Activated CD8-positive, alpha-beta memory T cell treated with anti-CD3 and anti-CD28 coated beads, Interleukin-2, amount 10 ng/mL, durations not matched to agents 7 days and 5 days (primary cell): ENCODE measurements at regions of chr13 and their contacts with region 1.

Region 1: GRCh38 chr13:21297914-21298831 is 121.7 kb downstream of the MRPL57 start:
- DNase-seq: peak; percentile 88
- ATAC-seq: peak; percentile 95
- H3K4me3 Mint-ChIP-seq: peak overlapping the region; percentile 82
- H3K27ac Mint-ChIP-seq: peak overlapping the region; percentile 68
- H3K4me1 Mint-ChIP-seq: peaks cover 27% of the 10 kb centered on the region
- H3K27me3 Mint-ChIP-seq: no peaks in the 10 kb centered on the region

Region 2: DNA sequence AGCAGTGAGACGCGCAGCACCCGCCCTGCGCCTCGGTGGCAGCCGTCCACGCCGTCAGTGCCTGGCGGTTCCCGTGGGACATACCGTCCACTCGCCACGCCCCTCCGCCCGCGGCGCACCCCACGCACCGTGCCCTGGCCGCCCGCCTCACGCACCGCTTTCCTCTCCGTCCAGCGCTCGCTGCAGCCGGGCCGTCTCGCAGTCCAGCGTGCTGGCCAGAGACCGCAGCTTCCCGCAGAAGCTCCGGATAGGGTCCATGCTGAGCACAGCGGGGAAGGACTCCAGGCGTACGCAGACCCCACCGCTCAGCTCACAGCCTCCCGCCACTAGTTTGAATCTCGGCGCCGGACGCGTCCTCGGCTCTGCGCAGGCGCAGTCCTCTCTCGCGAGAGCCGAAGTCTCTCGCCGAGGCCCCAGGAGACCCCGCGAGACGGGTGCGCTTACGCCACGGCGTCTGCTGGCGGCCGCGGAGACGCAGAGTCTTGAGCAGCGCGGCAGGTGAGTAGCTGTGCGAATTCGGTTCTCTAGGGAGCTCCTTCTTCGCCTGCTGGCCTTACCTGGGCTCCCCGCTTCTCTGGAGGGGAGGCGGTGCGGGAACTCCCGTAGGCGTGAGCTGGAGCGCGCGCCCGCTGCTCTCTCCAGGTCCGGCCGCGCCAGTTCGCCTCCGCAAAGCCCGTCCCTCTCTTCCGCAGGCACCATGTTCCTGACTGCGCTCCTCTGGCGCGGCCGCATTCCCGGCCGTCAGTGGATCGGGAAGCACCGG is 121.8 kb before region 1 on chr13 and contains the starts of genes MRPL57 and SKA3:
- CTCF ChIA-PET with region 1: interaction called, 18 read pairs
- DNase-seq: peak; percentile 96
- ATAC-seq: peak; percentile 95
- H3K4me3 Mint-ChIP-seq: peak within 1 kb of the TSS; percentile 99
- H3K27ac Mint-ChIP-seq: peak within 1 kb of the TSS; percentile 97
- H3K4me1 Mint-ChIP-seq: peaks cover 37% of the 10 kb centered on the region
- H3K27me3 Mint-ChIP-seq: no peaks in the 10 kb centered on the region
- total RNA-seq, gene MRPL57: 22.5 to 23.5 TPM
- total RNA-seq, gene SKA3: 36.6 to 39.6 TPM

Region 3: DNA sequence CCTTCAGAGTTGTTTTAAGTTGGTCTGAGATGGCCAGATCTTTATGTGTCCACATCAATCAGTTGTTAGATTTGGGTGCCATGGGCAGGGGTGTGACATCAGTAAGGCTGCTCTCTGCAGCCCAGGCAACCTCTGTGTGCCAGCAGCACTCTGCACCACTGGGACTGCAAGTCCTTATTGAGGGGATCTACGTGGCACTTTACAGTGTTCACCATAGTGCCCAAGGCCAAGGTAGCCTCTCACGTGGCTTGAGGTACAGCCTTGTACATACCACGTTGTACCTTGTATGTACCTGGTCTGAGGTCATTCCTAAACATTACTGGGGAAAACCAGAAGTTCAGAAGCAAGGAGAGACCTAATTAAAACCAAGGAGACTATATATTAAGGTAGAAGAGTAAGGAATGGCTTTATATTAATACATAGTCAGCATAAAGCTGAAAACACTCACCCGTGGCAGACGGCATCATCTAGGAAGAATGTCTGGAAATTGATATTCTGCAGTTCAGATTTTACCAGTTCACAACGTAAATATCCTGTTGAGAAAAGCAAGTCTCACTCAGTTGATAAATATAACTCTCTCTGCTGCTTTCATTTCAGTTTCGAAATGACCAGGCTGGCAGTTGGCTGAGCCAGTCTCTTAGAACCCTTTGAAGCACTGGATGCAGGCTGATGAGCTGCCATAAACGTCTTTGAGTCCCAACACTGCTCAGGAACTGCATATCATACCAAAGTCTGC is 32.1 kb after region 1 on chr13:
- CTCF ChIA-PET with region 1: interaction called, 12 read pairs
- DNase-seq: peak; percentile 80
- ATAC-seq: peak; percentile 85
- H3K4me3 Mint-ChIP-seq: peak overlapping the region; percentile 57
- H3K27ac Mint-ChIP-seq: peak overlapping the region; percentile 89
- H3K4me1 Mint-ChIP-seq: peaks cover 48% of the 10 kb centered on the region
- H3K27me3 Mint-ChIP-seq: no peaks in the 10 kb centered on the region

Region 4: GRCh38 chr13:21344662-21345176 is 46.5 kb after region 1 on chr13:
- CTCF ChIA-PET with region 1: interaction called, 12 read pairs
- DNase-seq: peak; percentile 80
- ATAC-seq: peak; percentile 82
- H3K4me3 Mint-ChIP-seq: peak overlapping the region; percentile 74
- H3K27ac Mint-ChIP-seq: peak overlapping the region; percentile 84
- H3K4me1 Mint-ChIP-seq: peaks cover 30% of the 10 kb centered on the region
- H3K27me3 Mint-ChIP-seq: no peaks in the 10 kb centered on the region

Region 5: GRCh38 chr13:21458813-21459701 is 160.9 kb after region 1 on chr13 and contains the start of gene ZDHHC20:
- CTCF ChIA-PET with region 1: interaction called, 19 read pairs
- DNase-seq: peak; percentile 89
- ATAC-seq: peak; percentile 89
- H3K4me3 Mint-ChIP-seq: peak within 1 kb of the TSS; percentile 89
- H3K27ac Mint-ChIP-seq: peak within 1 kb of the TSS; percentile 90
- H3K4me1 Mint-ChIP-seq: peaks cover 34% of the 10 kb centered on the region
- H3K27me3 Mint-ChIP-seq: no peaks in the 10 kb centered on the region
- total RNA-seq, gene ZDHHC20: 65.7 to 68.0 TPM

Region 6: DNA sequence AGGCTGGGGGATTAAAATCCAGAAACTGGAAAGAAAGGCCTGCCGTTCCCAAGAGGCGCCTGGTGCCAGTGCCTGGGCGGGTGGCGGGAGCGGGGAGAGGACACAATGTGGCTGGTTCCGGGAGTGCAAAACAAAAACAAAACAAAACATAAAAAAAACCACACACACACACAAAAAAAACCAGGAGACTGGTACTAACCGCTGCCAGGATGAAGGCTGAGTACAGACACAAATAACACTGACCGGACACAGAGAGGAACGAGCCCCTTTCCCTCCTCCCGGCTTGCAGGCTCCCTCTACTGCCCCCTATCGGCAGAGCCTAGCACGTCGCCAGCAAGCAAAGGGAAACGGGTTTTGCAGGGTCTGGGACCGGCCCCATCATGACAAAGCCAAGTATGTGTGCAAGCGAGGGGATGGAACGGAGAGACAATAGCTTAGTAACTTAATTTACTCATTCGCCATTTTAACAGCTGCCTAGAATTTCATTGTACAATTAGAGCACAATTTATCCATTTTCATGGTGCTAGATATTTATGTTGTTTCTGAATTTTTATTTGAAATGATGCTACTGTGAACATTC is 178.8 kb after region 1 on chr13:
- CTCF ChIA-PET with region 1: interaction called, 131 read pairs
- DNase-seq: peak; percentile 90
- ATAC-seq: peak; percentile 85
- H3K4me3 Mint-ChIP-seq: peak overlapping the region; percentile 79
- H3K27ac Mint-ChIP-seq: peak overlapping the region; percentile 67
- H3K4me1 Mint-ChIP-seq: peaks cover 25% of the 10 kb centered on the region
- H3K27me3 Mint-ChIP-seq: peaks cover 10% of the 10 kb centered on the region